HAP-1 (cell line): ENCODE measurements at regions of chr4 and their contacts with region 1.

Region 1: DNA sequence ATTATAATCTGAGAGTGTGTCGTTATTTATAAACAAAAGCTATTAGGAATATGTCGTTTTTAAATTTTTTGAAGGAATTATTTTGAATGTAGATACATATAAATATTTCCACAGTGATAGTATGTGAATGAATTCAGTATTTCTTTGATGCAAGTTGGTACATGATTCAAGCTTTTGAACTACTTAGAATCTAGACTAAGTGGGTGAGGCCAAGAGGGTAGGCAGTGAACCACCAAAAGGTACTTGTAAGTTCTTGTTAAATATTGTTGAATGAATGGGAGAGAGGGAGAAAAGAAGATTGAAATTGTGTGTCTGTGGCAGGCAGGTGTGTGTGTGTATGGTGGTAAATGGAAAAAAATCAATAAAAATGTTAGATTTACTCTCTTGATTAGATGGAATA is 69.6 kb downstream of the ARFIP1 start:
- DNase-seq: no peak
- H3K4me3 ChIP-seq: no peak overlapping the region
- H3K4me1 ChIP-seq: peaks cover 2% of the 10 kb centered on the region; the same call in 1 of the 2 replicates
- H3K27me3 ChIP-seq: no peaks in the 10 kb centered on the region

Region 2: GRCh38 chr4:152352622-152353116 is 496.7 kb before region 1 on chr4:
- in situ Hi-C with region 1: no loop called
- DNase-seq: peak; percentile 84 to 99
- H3K4me3 ChIP-seq: peak overlapping the region; percentile 34
- H3K4me1 ChIP-seq: peaks cover 48% of the 10 kb centered on the region
- H3K27me3 ChIP-seq: no peaks in the 10 kb centered on the region

Region 3: DNA sequence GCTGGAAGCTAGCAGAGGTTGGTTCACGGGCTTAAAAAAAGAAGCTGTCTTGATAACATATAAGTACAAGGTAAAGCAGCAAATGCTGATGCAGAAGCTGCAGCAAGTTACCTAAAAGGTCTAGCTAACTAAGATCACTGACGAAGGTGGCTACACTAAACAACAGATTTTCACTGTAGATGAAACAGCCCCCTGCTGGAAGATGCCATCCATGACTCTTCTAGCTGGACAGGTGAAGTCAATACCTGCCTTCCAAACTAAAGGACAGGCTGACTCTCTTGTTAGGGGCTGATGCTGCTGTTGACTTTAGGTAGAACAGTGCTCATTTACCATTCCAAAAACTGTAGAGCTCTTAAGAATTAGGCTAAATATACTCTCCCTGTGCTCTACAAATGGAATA is 413.0 kb before region 1 on chr4:
- in situ Hi-C with region 1: no loop called
- DNase-seq: no peak
- H3K4me3 ChIP-seq: no peak overlapping the region
- H3K4me1 ChIP-seq: peaks cover 12% of the 10 kb centered on the region
- H3K27me3 ChIP-seq: no peaks in the 10 kb centered on the region

Region 4: DNA sequence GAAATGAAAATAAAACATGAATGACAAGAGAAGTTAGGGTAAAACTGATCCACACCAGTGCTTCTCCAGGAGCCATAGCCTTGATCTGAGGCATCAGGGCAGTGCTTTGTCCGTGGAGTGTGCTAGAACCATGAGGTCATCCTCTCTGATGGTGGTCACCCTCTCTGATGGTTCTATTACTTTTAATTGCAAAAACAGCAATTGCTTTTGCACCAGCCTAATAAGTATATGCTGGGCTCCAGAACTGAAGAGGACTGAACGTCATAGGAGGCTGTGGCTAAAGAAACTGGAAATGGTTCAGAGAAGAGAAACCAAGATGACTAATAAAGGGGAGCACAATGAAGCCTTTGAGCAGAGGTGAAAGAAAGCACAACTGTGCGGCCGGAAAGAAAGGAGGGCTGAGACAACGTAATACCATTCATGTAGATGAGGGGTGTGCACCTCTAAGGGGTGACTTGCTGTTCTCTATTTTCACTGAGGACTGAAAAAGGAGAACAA is 152.5 kb before region 1 on chr4:
- in situ Hi-C with region 1: no loop called
- DNase-seq: no peak
- H3K4me3 ChIP-seq: no peak overlapping the region
- H3K4me1 ChIP-seq: no peaks in the 10 kb centered on the region; the same call in 1 of the 2 replicates
- H3K27me3 ChIP-seq: no peaks in the 10 kb centered on the region

Region 5: DNA sequence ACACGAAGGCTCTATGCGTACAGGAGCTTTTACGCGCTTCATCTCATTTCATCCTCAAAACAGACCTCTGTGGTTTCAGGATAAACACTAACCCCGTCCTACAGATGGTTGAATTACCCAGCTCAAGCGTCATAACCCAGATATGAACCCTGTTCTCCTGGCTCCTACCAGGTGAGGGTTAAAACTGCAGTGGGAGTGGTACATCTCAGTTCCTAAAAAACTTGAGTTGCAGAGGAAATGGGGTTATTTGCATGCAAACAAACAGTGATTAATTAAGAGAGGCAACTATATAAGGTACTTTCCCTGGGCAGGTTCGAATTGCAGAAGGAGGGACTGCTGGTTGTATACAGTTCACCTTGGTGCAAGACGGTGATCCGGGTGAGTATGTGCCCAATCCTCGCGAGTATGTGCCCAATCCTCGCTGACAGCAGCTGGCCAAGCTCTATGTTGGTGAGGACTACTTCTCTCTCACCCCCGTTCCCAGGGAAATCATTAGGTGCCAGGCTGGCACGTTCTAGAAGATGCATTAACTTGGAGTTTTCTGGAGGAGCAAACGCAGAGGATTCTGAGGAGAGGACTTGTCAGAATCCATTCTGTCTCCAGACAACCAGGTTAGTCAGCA is 159.3 kb after region 1 on chr4:
- in situ Hi-C with region 1: no loop called
- DNase-seq: no peak
- H3K4me3 ChIP-seq: no peak overlapping the region
- H3K4me1 ChIP-seq: no peaks in the 10 kb centered on the region
- H3K27me3 ChIP-seq: no peaks in the 10 kb centered on the region

Region 6: GRCh38 chr4:153127760-153128494 is 278.6 kb after region 1 on chr4:
- in situ Hi-C with region 1: loop called (anchors 5 kb)
- DNase-seq: peak; percentile 96
- H3K4me3 ChIP-seq: peak overlapping the region; percentile 15
- H3K4me1 ChIP-seq: peaks cover 7% of the 10 kb centered on the region
- H3K27me3 ChIP-seq: no peaks in the 10 kb centered on the region